Endothelial cell of umbilical vein (primary cell): ENCODE measurements at regions of chr1 and their contacts with region 1.

Region 1: GRCh38 chr1:218345673-218346390 is 696 bp downstream of the TGFB2 start:
- DNase-seq: peak; percentile 74
- H3K4me3 ChIP-seq: peak overlapping the region; percentile 86 to 95 (median 88)
- H3K27ac ChIP-seq: peak overlapping the region; percentile 85
- H3K4me1 ChIP-seq: peaks cover 32% of the 10 kb centered on the region
- H3K27me3 ChIP-seq: no peaks in the 10 kb centered on the region
- CTCF ChIP-seq: no peak
- POLR2A ChIP-seq: peak; percentile 75

Region 2: GRCh38 chr1:218488986-218489385 is 143.2 kb after region 1 on chr1:
- CTCF ChIA-PET with region 1: no interaction called
- POLR2A ChIA-PET with region 1: no interaction called
- dilution Hi-C with region 1: no loop called
- intact Hi-C with region 1: no loop called
- DNase-seq: no peak
- H3K4me3 ChIP-seq: no peak overlapping the region
- H3K27ac ChIP-seq: no peak overlapping the region
- H3K4me1 ChIP-seq: peaks cover 11% of the 10 kb centered on the region
- H3K27me3 ChIP-seq: no peaks in the 10 kb centered on the region
- CTCF ChIP-seq: no peak
- POLR2A ChIP-seq: no peak

Region 3: DNA sequence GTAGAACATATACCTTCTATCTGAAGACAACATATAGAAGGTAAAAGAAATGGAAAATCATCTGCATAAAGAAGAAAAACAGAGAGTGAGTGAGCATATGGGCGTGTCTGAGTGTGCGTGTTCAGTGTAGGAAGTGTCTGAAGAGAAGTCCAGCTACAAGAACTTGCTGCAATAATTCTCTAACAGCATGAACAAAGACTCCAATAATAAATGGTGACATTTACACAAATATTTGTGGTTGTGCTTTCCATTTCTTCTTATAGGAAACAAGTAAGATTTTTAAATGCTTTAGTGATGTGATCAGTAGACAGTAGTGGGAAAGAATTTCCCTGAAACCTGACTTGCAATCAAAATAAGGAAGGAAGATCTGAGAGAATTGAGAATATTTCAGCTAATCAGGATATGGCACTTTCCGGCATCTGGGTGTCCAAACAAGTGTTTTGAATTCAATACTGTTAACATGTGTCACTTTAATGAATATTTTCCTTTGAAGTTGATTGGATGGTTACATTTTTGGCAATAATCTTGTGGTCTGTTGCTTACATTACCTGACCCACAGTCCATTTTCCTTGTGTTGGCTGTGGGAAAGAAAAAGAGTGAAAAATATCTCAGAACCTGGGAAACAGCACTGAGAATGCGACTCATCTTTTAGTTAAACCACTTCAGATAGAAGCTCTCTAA is 153.3 kb after region 1 on chr1:
- CTCF ChIA-PET with region 1: interaction called, 3 read pairs
- POLR2A ChIA-PET with region 1: interaction called, 3 read pairs
- dilution Hi-C with region 1: no loop called
- intact Hi-C with region 1: loop called (anchors 2 kb)
- DNase-seq: peak; percentile 83
- H3K4me3 ChIP-seq: peak overlapping the region in 1 of 3 experiments; percentile 60
- H3K27ac ChIP-seq: peak overlapping the region; percentile 93
- H3K4me1 ChIP-seq: peaks cover 29% of the 10 kb centered on the region
- H3K27me3 ChIP-seq: no peaks in the 10 kb centered on the region
- CTCF ChIP-seq: no peak
- POLR2A ChIP-seq: no peak

Region 4: GRCh38 chr1:218592688-218593087 is 246.9 kb after region 1 on chr1:
- CTCF ChIA-PET with region 1: no interaction called
- POLR2A ChIA-PET with region 1: no interaction called
- dilution Hi-C with region 1: no loop called
- intact Hi-C with region 1: loop called (anchors 2 kb)
- DNase-seq: peak; percentile 94
- H3K4me3 ChIP-seq: peak overlapping the region in 1 of 3 experiments; percentile 7
- H3K27ac ChIP-seq: peak overlapping the region; percentile 68
- H3K4me1 ChIP-seq: peaks cover 19% of the 10 kb centered on the region
- H3K27me3 ChIP-seq: no peaks in the 10 kb centered on the region
- CTCF ChIP-seq: no peak
- POLR2A ChIP-seq: peak; percentile 42

Region 5: GRCh38 chr1:218705911-218706893 is 360.4 kb after region 1 on chr1:
- CTCF ChIA-PET with region 1: no interaction called
- POLR2A ChIA-PET with region 1: no interaction called
- dilution Hi-C with region 1: no loop called
- intact Hi-C with region 1: loop called (anchors 1 kb)
- DNase-seq: peak; percentile 74
- H3K4me3 ChIP-seq: no peak overlapping the region
- H3K27ac ChIP-seq: peak overlapping the region; percentile 86
- H3K4me1 ChIP-seq: peaks cover 26% of the 10 kb centered on the region
- H3K27me3 ChIP-seq: no peaks in the 10 kb centered on the region
- CTCF ChIP-seq: no peak
- POLR2A ChIP-seq: no peak

Region 6: DNA sequence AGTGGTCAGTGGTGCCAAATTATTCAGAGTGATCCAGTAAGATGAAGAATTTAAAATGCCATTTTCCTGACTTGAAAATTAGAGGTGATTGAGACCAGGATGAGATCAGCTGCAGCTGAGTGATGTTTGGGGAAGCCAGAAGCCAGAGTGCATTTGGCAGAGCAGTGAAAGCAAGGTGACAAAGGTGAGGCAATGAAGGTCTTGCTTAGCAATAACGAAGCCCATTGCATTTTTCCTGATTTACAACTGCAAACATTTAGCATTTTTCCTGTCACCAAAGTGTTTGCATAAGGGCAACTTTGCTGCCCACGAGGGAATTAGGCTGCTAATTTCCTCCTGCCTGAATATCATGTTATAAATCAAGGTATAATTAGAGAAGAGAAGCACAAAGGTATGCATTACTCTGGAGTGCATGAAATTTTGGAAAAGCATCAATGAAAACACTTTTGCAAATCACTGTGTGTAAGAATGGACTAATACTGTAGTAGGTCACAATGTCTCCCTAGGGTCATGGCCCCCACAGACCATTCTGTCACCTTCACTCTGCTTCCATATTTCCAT is 639.7 kb after region 1 on chr1:
- CTCF ChIA-PET with region 1: no interaction called
- POLR2A ChIA-PET with region 1: no interaction called
- dilution Hi-C with region 1: no loop called
- intact Hi-C with region 1: loop called (anchors 5 kb)
- DNase-seq: no peak
- H3K4me3 ChIP-seq: no peak overlapping the region
- H3K27ac ChIP-seq: no peak overlapping the region
- H3K4me1 ChIP-seq: no peaks in the 10 kb centered on the region
- H3K27me3 ChIP-seq: peaks cover 0 to 2% of the 10 kb centered on the region in 2 experiments
- CTCF ChIP-seq: no peak
- POLR2A ChIP-seq: no peak

Region 7: GRCh38 chr1:219324629-219325367 is 979.0 kb after region 1 on chr1:
- CTCF ChIA-PET with region 1: no interaction called
- POLR2A ChIA-PET with region 1: no interaction called
- dilution Hi-C with region 1: no loop called
- intact Hi-C with region 1: loop called (anchors 5 kb)
- DNase-seq: peak; percentile 83
- H3K4me3 ChIP-seq: no peak overlapping the region
- H3K27ac ChIP-seq: peak overlapping the region; percentile 78
- H3K4me1 ChIP-seq: peaks cover 44% of the 10 kb centered on the region
- H3K27me3 ChIP-seq: no peaks in the 10 kb centered on the region
- CTCF ChIP-seq: no peak
- POLR2A ChIP-seq: peak; percentile 63